A549 (cell line): ENCODE measurements at regions of chr15 and their contacts with region 1.

Region 1: GRCh38 chr15:90320061-90320884 is 31.8 kb upstream of the ZNF774 start:
- DNase-seq: peak; percentile 92 to 95
- ATAC-seq: peak; percentile 98 to 99
- H3K4me3 ChIP-seq: no peak overlapping the region
- H3K27ac ChIP-seq: peak overlapping the region; percentile 60 to 76
- H3K4me1 ChIP-seq: peaks cover 13% of the 10 kb centered on the region
- CTCF ChIP-seq: peak; percentile 99
- EP300 ChIP-seq: no peak
- POLR2A ChIP-seq: no peak
- RAD21 ChIP-seq: peak; percentile 99 to 100

Region 2: GRCh38 chr15:89693686-89694085 is 626.6 kb before region 1 on chr15:
- CTCF ChIA-PET with region 1: no interaction called
- POLR2A ChIA-PET with region 1: no interaction called
- DNase-seq: no peak
- ATAC-seq: no peak
- H3K4me3 ChIP-seq: no peak overlapping the region
- H3K27ac ChIP-seq: no peak overlapping the region
- H3K4me1 ChIP-seq: 0 out of 3 replicates have a peak, but pooled peaks cover 5% of the 10 kb centered on the region
- CTCF ChIP-seq: no peak
- EP300 ChIP-seq: no peak
- POLR2A ChIP-seq: no peak
- RAD21 ChIP-seq: no peak

Region 3: GRCh38 chr15:90291679-90292356 is 28.5 kb before region 1 on chr15:
- CTCF ChIA-PET with region 1: interaction called, 45 read pairs
- POLR2A ChIA-PET with region 1: no interaction called
- DNase-seq: peak; percentile 62 to 71
- ATAC-seq: peak; percentile 32 to 66; a peak in 3 of 6 replicates
- H3K4me3 ChIP-seq: no peak overlapping the region
- H3K27ac ChIP-seq: no peak overlapping the region
- H3K4me1 ChIP-seq: no peaks in the 10 kb centered on the region
- CTCF ChIP-seq: no peak
- EP300 ChIP-seq: no peak; a peak in 1 of 5 replicates
- POLR2A ChIP-seq: no peak
- RAD21 ChIP-seq: no peak

Region 4: DNA sequence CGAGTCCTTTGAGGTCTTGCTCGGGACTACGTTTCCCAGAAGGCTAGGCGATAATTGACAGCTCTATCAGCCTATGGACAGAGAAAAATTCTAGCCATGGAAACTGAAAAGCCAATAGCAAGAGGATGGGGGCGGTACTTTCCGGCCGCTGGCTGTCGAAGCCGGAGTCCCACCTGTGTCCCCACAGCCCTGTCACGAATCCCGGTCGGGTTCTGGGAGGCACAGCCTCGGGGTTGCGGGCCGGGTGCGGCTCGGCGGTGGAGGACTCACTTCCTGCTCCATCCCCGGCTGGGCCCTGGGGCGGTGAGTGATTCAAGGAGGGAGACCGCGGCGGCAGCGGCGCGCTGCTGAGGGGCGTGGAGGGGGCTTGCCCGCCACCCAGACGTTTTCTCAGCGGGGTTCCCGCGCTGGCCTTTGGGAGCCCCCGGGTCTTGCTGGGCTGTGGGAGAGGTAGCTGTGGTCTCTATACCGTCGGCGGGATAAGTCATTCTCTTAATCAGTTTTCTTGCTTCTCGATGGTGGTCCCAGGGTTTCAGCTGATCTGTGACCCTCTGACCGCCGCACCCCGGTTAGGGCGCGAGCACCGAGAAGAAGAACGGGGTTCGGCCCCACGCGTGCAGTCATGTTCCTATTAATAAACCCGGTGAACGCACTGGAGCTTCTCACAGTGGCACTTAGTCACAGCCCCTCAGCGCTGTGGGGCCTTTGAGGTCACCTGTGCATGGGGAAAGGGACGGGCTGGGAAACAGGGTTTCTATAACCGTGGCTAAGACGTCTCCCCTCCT is 32.0 kb after region 1 on chr15 and contains the start of gene ZNF774:
- CTCF ChIA-PET with region 1: interaction called, 94 read pairs
- POLR2A ChIA-PET with region 1: no interaction called
- DNase-seq: peak; percentile 96 to 100
- ATAC-seq: peak; percentile 98 to 99
- H3K4me3 ChIP-seq: peak within 1 kb of the TSS; percentile 72
- H3K27ac ChIP-seq: peak within 1 kb of the TSS; percentile 72 to 85
- H3K4me1 ChIP-seq: no peaks in the 10 kb centered on the region
- CTCF ChIP-seq: no peak
- EP300 ChIP-seq: no peak
- POLR2A ChIP-seq: peak; percentile 51
- RAD21 ChIP-seq: no peak
- polyA plus RNA-seq, gene ZNF774: 1.2 and 1.4 TPM in 2 replicates

Region 5: DNA sequence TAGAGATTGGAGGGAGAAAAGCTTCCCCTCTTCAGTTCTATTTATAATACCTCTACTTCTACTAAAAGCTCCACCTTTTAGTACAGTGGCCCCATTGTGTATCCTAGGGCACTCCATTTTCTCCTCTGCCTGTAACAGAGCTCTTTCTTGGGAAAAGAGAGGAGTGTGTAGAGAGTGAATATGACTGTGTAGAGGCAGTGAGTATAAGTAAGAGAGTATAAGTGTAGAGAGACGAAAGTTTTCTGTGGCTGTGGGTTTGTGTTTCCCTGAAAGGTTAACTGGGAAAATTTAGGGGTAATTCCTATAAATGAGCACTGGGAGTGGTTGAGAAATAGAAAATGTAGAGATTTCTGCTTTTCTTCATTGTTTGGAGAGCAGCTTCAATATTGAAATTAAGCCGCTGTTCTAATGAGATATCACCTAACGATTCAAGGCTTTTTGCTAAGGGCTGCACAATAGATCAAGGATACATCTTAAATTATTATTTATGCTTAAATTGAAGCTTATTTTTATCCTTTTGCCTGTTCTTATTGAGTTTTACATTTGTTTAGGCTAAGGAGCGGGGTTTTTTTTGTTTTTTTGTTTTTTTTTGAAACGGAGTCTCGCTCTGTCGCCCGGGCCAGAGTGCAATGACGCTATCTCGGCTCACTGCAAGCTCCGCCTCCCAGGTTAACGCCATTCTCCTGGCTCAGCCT is 74.6 kb after region 1 on chr15:
- CTCF ChIA-PET with region 1: interaction called, 22 read pairs
- POLR2A ChIA-PET with region 1: no interaction called
- DNase-seq: no peak
- ATAC-seq: peak in 1 of 2 experiments; percentile 42; a peak in 3 of 6 replicates
- H3K4me3 ChIP-seq: no peak overlapping the region
- H3K27ac ChIP-seq: no peak overlapping the region
- H3K4me1 ChIP-seq: peaks cover 20% of the 10 kb centered on the region
- CTCF ChIP-seq: no peak
- EP300 ChIP-seq: no peak
- POLR2A ChIP-seq: no peak
- RAD21 ChIP-seq: no peak

Region 6: GRCh38 chr15:90436952-90437351 is 116.7 kb after region 1 on chr15:
- CTCF ChIA-PET with region 1: interaction called, 23 read pairs
- POLR2A ChIA-PET with region 1: no interaction called
- DNase-seq: no peak
- ATAC-seq: no peak
- H3K4me3 ChIP-seq: no peak overlapping the region
- H3K27ac ChIP-seq: no peak overlapping the region
- H3K4me1 ChIP-seq: no peaks in the 10 kb centered on the region
- CTCF ChIP-seq: no peak
- EP300 ChIP-seq: no peak
- POLR2A ChIP-seq: no peak
- RAD21 ChIP-seq: no peak

Region 7: GRCh38 chr15:90497912-90498311 is 177.6 kb after region 1 on chr15:
- CTCF ChIA-PET with region 1: interaction called, 412 read pairs
- POLR2A ChIA-PET with region 1: no interaction called
- DNase-seq: no peak
- ATAC-seq: no peak; a peak in 1 of 6 replicates
- H3K4me3 ChIP-seq: no peak overlapping the region
- H3K27ac ChIP-seq: no peak overlapping the region
- H3K4me1 ChIP-seq: no peaks in the 10 kb centered on the region
- CTCF ChIP-seq: no peak
- EP300 ChIP-seq: no peak
- POLR2A ChIP-seq: no peak
- RAD21 ChIP-seq: no peak

Region 8: GRCh38 chr15:90603893-90604292 is 283.6 kb after region 1 on chr15:
- CTCF ChIA-PET with region 1: interaction called, 11 read pairs
- POLR2A ChIA-PET with region 1: no interaction called
- DNase-seq: peak in 1 of 2 experiments; percentile 47
- ATAC-seq: peak; percentile 65 to 77; a peak in 4 of 6 replicates
- H3K4me3 ChIP-seq: no peak overlapping the region
- H3K27ac ChIP-seq: no peak overlapping the region
- H3K4me1 ChIP-seq: no peaks in the 10 kb centered on the region
- CTCF ChIP-seq: peak; percentile 56
- EP300 ChIP-seq: no peak
- POLR2A ChIP-seq: no peak
- RAD21 ChIP-seq: peak; percentile 30 to 37; a peak in 4 of 5 replicates